ENCODE measurements at regions of chr6 and their contacts with region 1.

Region 1: GRCh38 chr6:89667872-89668556 is 29.5 kb upstream of the LYRM2 start:
- DNase-seq: no peak
- ATAC-seq: no peak
- H3K4me3 ChIP-seq: no peak overlapping the region
- H3K27ac ChIP-seq: no peak overlapping the region
- H3K4me1 ChIP-seq: no peaks in the 10 kb centered on the region
- H3K27me3 ChIP-seq: no peaks in the 10 kb centered on the region
- CTCF ChIP-seq: no peak

Region 2: GRCh38 chr6:89729818-89730217 is 61.8 kb after region 1 on chr6:
- CTCF ChIA-PET with region 1: no interaction called
- POLR2A ChIA-PET with region 1: no interaction called
- intact Hi-C with region 1: loop called (anchors 10 kb)
- DNase-seq: no peak
- ATAC-seq: no peak
- H3K4me3 ChIP-seq: no peak overlapping the region
- H3K27ac ChIP-seq: no peak overlapping the region
- H3K4me1 ChIP-seq: no peaks in the 10 kb centered on the region
- H3K27me3 ChIP-seq: no peaks in the 10 kb centered on the region
- CTCF ChIP-seq: no peak